ENCODE measurements at regions of chr1 and their contacts with region 1.

Region 1: GRCh38 chr1:27357281-27358037 is 9.3 kb downstream of the MAP3K6 start:
- DNase-seq: peak; percentile 93
- CTCF ChIP-seq: peak; percentile 97

Region 2: GRCh38 chr1:27321813-27322577 is 35.5 kb before region 1 on chr1 and contains the start of gene TMEM222:
- CTCF ChIA-PET with region 1: interaction called, 16 read pairs
- POLR2A ChIA-PET with region 1: no interaction called
- DNase-seq: peak; percentile 99
- CTCF ChIP-seq: no peak

Region 3: GRCh38 chr1:27341525-27342252 is 15.8 kb before region 1 on chr1 and contains the start of gene SYTL1:
- CTCF ChIA-PET with region 1: interaction called, 112 read pairs
- POLR2A ChIA-PET with region 1: no interaction called
- DNase-seq: peak; percentile 83
- CTCF ChIP-seq: no peak

Region 4: GRCh38 chr1:27383039-27383605 is 25.7 kb after region 1 on chr1 and contains the start of gene CD164L2:
- CTCF ChIA-PET with region 1: interaction called, 66 read pairs
- POLR2A ChIA-PET with region 1: no interaction called
- DNase-seq: no peak
- CTCF ChIP-seq: no peak

Measured in GM10248 (cell line).